ENCODE measurements at regions of chr10 and their contacts with region 1.

Region 1: DNA sequence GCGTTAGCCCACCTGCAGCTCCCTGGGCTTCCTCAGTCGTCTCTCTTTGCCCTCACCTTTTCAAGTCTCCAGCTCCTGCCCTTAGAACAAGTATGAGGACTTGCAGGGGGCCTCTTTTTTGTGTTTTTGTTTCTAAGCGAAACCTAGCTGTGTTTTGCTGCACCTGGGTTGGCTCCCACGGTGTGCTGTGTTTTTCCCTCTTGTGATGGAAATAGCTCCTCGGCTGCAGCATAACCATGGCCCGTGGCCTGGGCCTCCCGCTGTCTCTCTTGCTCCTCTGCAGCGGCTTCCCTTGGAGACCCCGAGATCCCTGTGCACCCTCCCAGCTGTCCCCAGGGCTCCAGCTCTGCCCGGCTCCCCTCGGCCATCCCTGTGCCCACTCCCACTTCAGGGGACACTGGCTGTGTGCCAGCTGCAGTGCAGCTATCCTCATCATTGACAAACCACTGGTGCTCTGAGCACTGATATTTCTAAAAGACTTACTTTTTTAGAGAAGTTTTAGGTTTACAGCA is 75.6 kb upstream of the TCERG1L start:
- DNase-seq: no peak
- ATAC-seq: peak; percentile 40; the same call in 1 of the 2 replicates
- H3K4me3 ChIP-seq: no peak overlapping the region
- H3K27ac ChIP-seq: no peak overlapping the region
- H3K4me1 ChIP-seq: no peaks in the 10 kb centered on the region
- H3K27me3 ChIP-seq: peaks cover 17% of the 10 kb centered on the region
- CTCF ChIP-seq: no peak

Region 2: DNA sequence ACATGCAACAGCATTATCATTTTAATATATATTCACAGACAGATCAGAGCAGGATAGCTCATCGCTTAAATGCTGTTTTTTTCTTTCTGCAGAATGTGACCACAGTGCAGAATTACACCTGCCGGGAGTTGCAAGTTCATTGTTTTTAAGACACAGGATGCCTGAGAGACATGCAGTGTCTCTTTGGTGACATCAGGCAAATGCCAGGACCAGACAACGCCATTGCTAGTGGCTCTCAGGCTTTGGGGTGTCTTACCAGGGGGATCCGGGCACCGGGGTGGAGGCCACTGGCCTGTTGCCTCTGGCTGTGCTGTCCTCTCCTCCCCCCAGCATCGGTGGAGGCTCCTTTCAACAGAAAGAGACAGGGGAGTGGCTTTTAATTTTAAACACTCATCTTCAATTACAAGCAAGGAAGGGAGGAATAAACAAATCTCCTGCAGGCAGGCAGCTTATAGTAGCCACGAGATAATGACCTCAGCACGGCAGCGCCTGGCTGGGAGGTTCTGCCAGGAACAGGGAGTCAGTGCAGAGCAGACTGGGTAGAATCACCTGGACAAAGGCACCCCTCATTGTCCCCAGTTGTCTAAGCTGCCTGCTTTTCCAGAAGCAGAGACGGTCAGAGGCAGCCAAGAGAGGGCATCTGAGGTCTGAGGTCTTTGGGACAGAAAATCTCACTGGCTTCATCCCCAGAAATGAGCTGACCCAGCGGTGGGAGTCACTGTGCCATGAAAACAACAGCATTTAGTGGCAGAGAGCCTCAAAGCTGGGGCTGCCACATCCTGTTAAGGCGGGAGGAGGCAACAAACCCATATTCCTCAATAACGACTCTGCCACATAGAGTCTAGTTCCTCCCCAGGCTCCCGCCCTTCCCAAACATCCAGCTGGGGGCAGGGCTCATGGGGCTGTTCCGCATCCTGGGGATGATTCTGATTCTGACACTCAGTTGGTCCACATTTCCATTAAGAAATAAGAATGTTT is 223.9 kb before region 1 on chr10:
- CTCF ChIA-PET with region 1: interaction called, 13 read pairs
- POLR2A ChIA-PET with region 1: no interaction called
- in situ Hi-C with region 1: no loop called
- intact Hi-C with region 1: no loop called
- DNase-seq: no peak
- ATAC-seq: no peak
- H3K4me3 ChIP-seq: no peak overlapping the region
- H3K27ac ChIP-seq: no peak overlapping the region
- H3K4me1 ChIP-seq: no peaks in the 10 kb centered on the region
- H3K27me3 ChIP-seq: peaks cover 5% of the 10 kb centered on the region; the same call in 1 of the 2 replicates
- CTCF ChIP-seq: no peak

Region 3: DNA sequence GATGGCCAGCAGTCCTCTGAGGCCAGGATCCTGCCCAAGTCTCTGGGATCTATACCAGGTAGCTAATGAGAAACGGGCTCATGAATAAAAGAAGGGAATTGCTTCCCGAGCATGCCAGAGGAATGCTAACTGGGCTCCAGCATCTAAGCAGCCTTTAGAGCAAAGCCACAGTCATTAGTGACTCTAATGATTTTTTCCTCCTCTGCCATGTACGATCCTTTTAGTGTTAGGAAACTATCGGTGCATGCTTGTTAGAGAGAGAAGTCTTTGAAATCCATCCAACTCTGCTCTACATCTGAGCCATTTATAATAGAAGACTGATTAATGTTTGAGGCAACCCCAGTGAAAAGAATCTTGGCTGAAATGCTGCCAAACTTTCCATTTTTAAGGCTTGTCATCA is 49.4 kb after region 1 on chr10:
- CTCF ChIA-PET with region 1: no interaction called
- POLR2A ChIA-PET with region 1: no interaction called
- in situ Hi-C with region 1: no loop called
- intact Hi-C with region 1: no loop called
- DNase-seq: no peak
- ATAC-seq: no peak
- H3K4me3 ChIP-seq: no peak overlapping the region
- H3K27ac ChIP-seq: no peak overlapping the region
- H3K4me1 ChIP-seq: no peaks in the 10 kb centered on the region
- H3K27me3 ChIP-seq: peaks cover 37% of the 10 kb centered on the region
- CTCF ChIP-seq: no peak